Ovary (tissue), 10 donors: ENCODE measurements at regions of chr6 and their contacts with region 1.

Region 1: DNA sequence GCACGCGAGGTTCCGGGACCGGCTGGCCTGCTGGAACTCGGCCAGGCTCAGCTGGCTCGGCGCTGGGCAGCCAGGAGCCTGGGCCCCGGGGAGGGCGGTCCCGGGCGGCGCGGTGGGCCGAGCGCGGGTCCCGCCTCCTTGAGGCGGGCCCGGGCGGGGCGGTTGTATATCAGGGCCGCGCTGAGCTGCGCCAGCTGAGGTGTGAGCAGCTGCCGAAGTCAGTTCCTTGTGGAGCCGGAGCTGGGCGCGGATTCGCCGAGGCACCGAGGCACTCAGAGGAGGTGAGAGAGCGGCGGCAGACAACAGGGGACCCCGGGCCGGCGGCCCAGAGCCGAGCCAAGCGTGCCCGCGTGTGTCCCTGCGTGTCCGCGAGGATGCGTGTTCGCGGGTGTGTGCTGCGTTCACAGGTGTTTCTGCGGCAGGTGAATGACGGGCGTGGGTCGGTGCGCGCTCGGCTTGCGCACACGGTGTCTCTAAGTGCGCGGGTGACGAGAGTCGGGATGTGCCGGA is at the start of gene CDKN1A:
- DNase-seq: peak; percentile 91 to 95 (median 93)
- H3K4me3 ChIP-seq: peak within 1 kb of the TSS; percentile 95
- H3K27ac ChIP-seq: peak within 1 kb of the TSS; percentile 94 to 99
- H3K4me1 ChIP-seq: peaks cover 14% of the 10 kb centered on the region
- H3K27me3 ChIP-seq: no peaks in the 10 kb centered on the region
- CTCF ChIP-seq: peak; percentile 9 to 50 (median 25)
- EP300 ChIP-seq: no peak
- POLR2A ChIP-seq: peak; percentile 98
- total RNA-seq, gene CDKN1A: 82.1 to 305 (median 129) TPM

Region 2: DNA sequence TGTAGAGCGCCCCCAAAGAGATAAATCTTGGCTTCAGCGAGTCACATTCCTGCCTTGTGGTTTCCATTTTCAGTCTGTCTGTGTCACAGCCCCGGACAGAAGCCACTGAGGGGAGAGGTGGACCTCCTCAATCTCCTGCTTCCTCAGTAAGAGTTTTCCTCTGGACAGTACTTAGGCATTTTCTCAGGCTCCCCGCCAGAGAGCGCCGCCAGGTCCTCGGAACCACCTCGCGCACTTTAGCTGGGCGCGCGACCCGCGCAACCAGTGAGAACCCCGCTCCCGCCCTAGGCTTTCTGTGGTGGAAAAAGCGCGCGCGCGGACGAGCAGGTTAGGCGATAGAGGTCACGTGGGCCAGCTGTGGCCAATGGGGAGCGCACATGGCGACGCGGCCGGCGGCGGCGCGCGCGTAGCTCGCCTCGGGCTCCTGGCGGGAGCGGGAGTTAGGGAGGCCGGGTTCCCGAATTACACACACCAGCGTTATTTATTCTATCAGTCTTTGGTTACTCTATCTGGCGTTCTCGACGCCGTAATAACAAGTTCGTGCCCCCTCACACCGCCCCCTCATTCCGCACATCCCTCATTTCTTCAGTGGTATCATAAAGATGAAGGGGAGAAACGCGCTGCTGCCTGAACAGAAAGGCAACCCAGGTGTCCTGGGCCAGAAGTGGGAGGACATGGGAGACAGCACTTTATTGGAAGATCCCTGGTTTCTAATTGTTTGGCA is 255.3 kb before region 1 on chr6:
- intact Hi-C with region 1: loop called in 2 of 4 experiments (anchors 10 kb)
- DNase-seq: peak; percentile 96 to 99 (median 97)
- H3K4me3 ChIP-seq: peak overlapping the region; percentile 26
- H3K27ac ChIP-seq: peak overlapping the region; percentile 75 to 83
- H3K4me1 ChIP-seq: no peaks in the 10 kb centered on the region
- H3K27me3 ChIP-seq: no peaks in the 10 kb centered on the region
- CTCF ChIP-seq: peak; percentile 58 to 83 (median 83)
- EP300 ChIP-seq: no peak
- POLR2A ChIP-seq: peak; percentile 54

Region 3: GRCh38 chr6:36623547-36624459 is 54.8 kb before region 1 on chr6:
- intact Hi-C with region 1: loop called (anchors 1 to 5 kb)
- DNase-seq: peak; percentile 91 to 96 (median 94)
- H3K4me3 ChIP-seq: no peak overlapping the region
- H3K27ac ChIP-seq: peak overlapping the region; percentile 76 to 80
- H3K4me1 ChIP-seq: peaks cover 20% of the 10 kb centered on the region
- H3K27me3 ChIP-seq: no peaks in the 10 kb centered on the region
- CTCF ChIP-seq: peak; percentile 39 to 94 (median 87)
- EP300 ChIP-seq: no peak
- POLR2A ChIP-seq: no peak

Region 4: GRCh38 chr6:36642913-36643817 is 35.4 kb before region 1 on chr6:
- intact Hi-C with region 1: loop called in 2 of 4 experiments (anchors 5 kb)
- DNase-seq: peak; percentile 91 to 97 (median 96)
- H3K4me3 ChIP-seq: no peak overlapping the region
- H3K27ac ChIP-seq: peak overlapping the region; percentile 25 to 66
- H3K4me1 ChIP-seq: peaks cover 11% of the 10 kb centered on the region
- H3K27me3 ChIP-seq: no peaks in the 10 kb centered on the region
- CTCF ChIP-seq: no peak
- EP300 ChIP-seq: no peak
- POLR2A ChIP-seq: peak; percentile 14

Region 5: GRCh38 chr6:36759148-36759759 is 80.7 kb after region 1 on chr6:
- intact Hi-C with region 1: loop called in 1 of 4 experiments (anchors 10 kb)
- DNase-seq: peak; percentile 72 to 87 (median 85)
- H3K4me3 ChIP-seq: no peak overlapping the region
- H3K27ac ChIP-seq: no peak overlapping the region
- H3K4me1 ChIP-seq: no peaks in the 10 kb centered on the region
- H3K27me3 ChIP-seq: no peaks in the 10 kb centered on the region
- CTCF ChIP-seq: peak; percentile 91 to 92 (median 92)
- EP300 ChIP-seq: no peak
- POLR2A ChIP-seq: no peak

Region 6: GRCh38 chr6:36839749-36840431 is 161.3 kb after region 1 on chr6:
- intact Hi-C with region 1: loop called in 1 of 4 experiments (anchors 10 kb)
- DNase-seq: peak; percentile 34 to 76 (median 54)
- H3K4me3 ChIP-seq: peak overlapping the region; percentile 45
- H3K27ac ChIP-seq: peak overlapping the region in 1 of 2 donors; percentile 0
- H3K4me1 ChIP-seq: peaks cover 8% of the 10 kb centered on the region
- H3K27me3 ChIP-seq: no peaks in the 10 kb centered on the region
- CTCF ChIP-seq: peak in 1 of 3 donors; percentile 7
- EP300 ChIP-seq: no peak
- POLR2A ChIP-seq: no peak